Activated naive CD4-positive, alpha-beta T cell treated with anti-CD3 and anti-CD28 coated beads for 36 hours (primary cell): ENCODE measurements at regions of chr6 and their contacts with region 1.

Region 1: DNA sequence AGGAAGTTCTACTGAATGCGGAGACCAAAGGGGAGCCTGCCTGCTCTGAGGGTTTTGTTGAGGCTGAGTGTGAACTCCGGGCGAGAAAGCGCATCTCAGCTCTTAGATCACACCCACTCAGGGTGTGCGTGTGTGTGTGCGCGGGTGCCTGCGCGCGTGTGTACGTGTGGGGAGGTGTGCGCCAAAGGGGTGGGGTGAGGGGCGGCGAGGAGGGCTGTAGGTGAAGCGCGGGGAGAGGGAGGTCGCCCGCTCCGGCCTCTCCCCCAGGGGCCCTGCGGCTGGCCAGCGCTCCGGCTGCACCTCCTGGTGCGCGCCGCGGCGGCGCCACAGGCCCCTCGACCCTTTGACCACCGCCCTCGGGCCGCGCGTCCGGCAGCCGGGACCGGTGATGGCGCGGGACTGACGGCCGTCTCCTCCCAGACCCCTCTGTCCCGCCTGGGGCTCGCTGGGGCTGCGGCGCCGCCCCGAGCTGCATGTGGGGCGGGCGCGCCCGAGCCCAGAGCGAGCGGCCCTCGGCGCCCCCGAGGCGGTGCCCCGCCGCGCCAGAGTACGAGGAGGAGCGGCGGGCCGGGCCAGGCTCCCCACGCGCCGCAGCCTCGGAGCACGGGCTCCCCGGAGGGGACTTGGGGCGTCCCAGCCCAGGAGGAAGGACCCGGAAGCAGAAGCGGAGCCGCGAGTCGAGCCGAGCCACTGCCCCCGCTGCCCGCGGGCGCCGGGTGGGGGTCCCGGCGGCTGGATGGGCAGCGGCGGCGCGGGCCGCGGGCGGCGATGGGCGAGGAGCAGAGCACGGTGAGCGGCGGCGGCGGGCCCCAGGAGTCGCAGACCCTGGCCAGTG is at the start of gene RNF217:
- DNase-seq: peak; percentile 33
- H3K4me3 Mint-ChIP-seq: peak within 1 kb of the TSS; percentile 81
- H3K27ac Mint-ChIP-seq: no peak within 1 kb of the TSS
- H3K4me1 Mint-ChIP-seq: peaks cover 41% of the 10 kb centered on the region
- H3K27me3 Mint-ChIP-seq: peaks cover 52% of the 10 kb centered on the region
- total RNA-seq, gene RNF217: 1.8 to 2.4 TPM

Region 2: GRCh38 chr6:124742971-124743370 is 219.0 kb before region 1 on chr6:
- CTCF ChIA-PET with region 1: no interaction called
- intact Hi-C with region 1: no loop called
- DNase-seq: no peak
- H3K4me3 Mint-ChIP-seq: no peak overlapping the region
- H3K27ac Mint-ChIP-seq: no peak overlapping the region
- H3K4me1 Mint-ChIP-seq: no peaks in the 10 kb centered on the region
- H3K27me3 Mint-ChIP-seq: no peaks in the 10 kb centered on the region

Region 3: DNA sequence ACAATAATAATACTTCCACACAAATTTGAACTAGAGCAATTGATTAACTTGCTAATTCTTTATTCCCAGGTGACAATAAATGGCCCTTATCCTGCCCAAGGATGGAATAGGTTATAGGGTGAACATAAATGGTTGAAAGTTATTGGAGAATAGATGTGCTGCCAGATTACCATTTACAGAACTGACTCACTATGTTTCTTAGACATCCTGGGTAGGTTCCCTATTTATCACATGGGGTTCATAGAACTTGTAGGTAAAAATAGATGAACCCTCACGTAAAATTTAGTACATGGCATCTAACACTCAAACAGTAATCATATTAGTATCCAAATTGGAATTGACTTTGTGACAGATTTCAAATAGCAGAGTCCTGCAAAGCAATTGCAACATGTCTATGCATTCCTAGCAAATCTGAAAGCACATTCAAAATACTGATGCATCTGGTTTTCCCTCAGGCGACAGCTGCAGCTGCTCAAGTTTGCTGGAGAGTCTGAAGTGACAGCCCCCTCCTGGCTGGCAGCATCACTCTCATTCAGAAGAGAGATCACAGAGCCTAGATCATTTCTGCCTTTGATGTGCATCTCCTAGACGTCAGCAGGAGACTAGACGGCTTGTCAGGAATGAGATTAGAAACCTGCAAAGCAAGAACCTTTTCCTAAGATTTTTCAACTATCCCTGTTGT is 80.0 kb before region 1 on chr6:
- CTCF ChIA-PET with region 1: interaction called, 5 read pairs
- intact Hi-C with region 1: loop called (anchors 2 kb)
- DNase-seq: no peak
- H3K4me3 Mint-ChIP-seq: no peak overlapping the region
- H3K27ac Mint-ChIP-seq: peak overlapping the region; percentile 14
- H3K4me1 Mint-ChIP-seq: peaks cover 19% of the 10 kb centered on the region
- H3K27me3 Mint-ChIP-seq: peaks cover 6% of the 10 kb centered on the region

Region 4: GRCh38 chr6:124947971-124948451 is 14.0 kb before region 1 on chr6:
- CTCF ChIA-PET with region 1: no interaction called
- intact Hi-C with region 1: loop called (anchors 1 kb)
- DNase-seq: no peak
- H3K4me3 Mint-ChIP-seq: no peak overlapping the region
- H3K27ac Mint-ChIP-seq: no peak overlapping the region
- H3K4me1 Mint-ChIP-seq: peaks cover 10% of the 10 kb centered on the region
- H3K27me3 Mint-ChIP-seq: peaks cover 6% of the 10 kb centered on the region

Region 5: DNA sequence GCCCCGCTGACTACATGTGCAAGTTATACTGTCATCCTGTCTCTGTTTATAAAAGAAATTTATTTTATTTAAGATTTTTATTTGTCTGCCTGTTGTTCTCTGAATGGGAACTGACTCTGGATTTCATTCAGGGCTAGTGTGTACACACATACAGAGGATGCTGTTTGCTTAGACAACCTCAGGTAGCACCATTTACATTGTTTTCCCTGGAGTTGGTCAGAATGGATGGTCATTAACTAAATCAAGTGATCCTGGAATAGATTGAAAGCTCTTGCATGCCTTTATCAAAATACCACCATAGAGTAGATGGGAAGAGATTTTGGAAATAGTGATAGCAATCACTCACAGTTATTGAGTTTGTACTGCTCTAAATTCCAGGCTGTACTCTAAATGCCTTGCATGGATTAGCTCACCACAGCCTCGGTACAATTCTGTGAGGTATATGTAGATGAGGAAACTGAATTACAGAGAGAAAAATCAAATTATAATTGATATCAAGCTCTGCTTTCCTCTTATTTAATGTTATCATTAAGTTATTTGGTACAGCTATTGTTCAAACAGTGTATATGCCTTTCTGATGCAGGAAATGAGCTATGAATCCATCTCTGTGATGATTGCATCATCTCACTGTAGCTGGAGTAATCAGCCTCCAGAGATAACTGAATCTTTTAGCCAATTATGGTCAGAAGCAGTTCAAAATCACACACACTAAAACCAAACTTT is 52.1 kb after region 1 on chr6:
- CTCF ChIA-PET with region 1: no interaction called
- intact Hi-C with region 1: loop called (anchors 2 kb)
- DNase-seq: no peak
- H3K4me3 Mint-ChIP-seq: no peak overlapping the region
- H3K27ac Mint-ChIP-seq: peak overlapping the region; percentile 3
- H3K4me1 Mint-ChIP-seq: peaks cover 13% of the 10 kb centered on the region
- H3K27me3 Mint-ChIP-seq: peaks cover 3% of the 10 kb centered on the region

Region 6: DNA sequence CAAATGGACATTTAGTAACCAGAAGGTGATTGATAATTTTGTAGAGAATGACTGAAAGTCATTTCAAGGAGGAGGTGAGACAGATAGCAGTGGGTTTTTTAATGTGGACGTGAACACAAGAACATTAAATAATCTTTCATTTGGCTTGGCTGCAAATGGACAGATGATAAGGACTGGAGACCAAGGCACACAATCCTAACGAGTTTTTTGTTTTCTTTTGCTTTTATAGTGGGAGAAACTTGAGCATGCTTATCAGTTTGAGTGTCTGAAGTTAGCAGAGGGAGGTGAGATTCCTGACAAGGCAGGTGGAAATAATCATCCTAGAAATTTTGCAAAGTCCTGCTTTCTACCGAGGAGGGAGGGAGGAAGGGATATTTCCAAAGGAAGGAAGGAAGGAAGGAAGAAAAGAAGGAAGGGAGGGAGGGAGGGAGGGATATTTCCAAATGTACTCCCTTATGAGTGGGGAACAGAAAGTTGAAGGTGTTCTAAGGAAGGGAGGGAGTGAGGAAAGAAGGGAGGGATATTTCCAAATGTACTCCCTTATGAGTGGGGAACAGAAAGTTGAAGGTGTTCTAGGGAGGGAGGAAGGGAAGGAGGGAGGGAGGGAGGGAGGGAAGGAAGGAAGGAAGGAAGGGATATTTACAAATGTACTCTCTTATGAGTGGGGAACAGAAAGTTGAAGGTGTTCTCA is 63.3 kb after region 1 on chr6:
- CTCF ChIA-PET with region 1: no interaction called
- intact Hi-C with region 1: no loop called
- DNase-seq: no peak
- H3K4me3 Mint-ChIP-seq: no peak overlapping the region
- H3K27ac Mint-ChIP-seq: no peak overlapping the region
- H3K4me1 Mint-ChIP-seq: no peaks in the 10 kb centered on the region
- H3K27me3 Mint-ChIP-seq: peaks cover 6% of the 10 kb centered on the region

Region 7: GRCh38 chr6:125066964-125067363 is 105.0 kb after region 1 on chr6:
- CTCF ChIA-PET with region 1: no interaction called
- intact Hi-C with region 1: loop called (anchors 2 kb)
- DNase-seq: peak; percentile 49
- H3K4me3 Mint-ChIP-seq: no peak overlapping the region
- H3K27ac Mint-ChIP-seq: no peak overlapping the region
- H3K4me1 Mint-ChIP-seq: no peaks in the 10 kb centered on the region
- H3K27me3 Mint-ChIP-seq: no peaks in the 10 kb centered on the region

Region 8: DNA sequence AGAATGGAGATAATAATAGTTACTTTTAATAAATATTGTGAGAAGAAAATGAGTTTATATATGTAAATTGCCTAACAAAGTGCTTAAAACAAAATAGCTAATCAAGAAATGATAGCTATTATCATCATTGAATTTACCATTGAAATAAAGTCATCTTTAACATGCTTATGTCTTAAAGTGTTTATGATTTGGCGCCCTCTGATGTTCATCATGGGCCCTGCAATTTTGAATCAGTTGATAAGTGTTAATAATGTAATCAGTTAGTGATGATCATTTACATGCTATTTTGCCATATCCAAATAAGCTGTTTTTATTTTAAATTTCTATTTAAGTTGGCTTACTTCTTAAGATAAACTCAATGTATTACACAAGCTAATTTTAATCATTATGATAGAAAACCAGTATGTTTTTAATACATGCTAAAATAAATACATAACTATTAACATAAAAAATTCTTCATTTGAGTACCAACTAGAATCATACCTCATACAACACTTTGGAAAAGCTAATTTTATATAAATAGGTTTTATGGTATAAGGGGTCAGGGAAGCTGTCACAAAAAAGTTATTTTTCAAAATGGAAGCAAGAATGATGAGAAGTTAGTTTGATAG is 152.4 kb after region 1 on chr6:
- CTCF ChIA-PET with region 1: no interaction called
- intact Hi-C with region 1: loop called (anchors 5 kb)
- DNase-seq: peak; percentile 76
- H3K4me3 Mint-ChIP-seq: no peak overlapping the region
- H3K27ac Mint-ChIP-seq: no peak overlapping the region
- H3K4me1 Mint-ChIP-seq: no peaks in the 10 kb centered on the region
- H3K27me3 Mint-ChIP-seq: no peaks in the 10 kb centered on the region

Region 9: DNA sequence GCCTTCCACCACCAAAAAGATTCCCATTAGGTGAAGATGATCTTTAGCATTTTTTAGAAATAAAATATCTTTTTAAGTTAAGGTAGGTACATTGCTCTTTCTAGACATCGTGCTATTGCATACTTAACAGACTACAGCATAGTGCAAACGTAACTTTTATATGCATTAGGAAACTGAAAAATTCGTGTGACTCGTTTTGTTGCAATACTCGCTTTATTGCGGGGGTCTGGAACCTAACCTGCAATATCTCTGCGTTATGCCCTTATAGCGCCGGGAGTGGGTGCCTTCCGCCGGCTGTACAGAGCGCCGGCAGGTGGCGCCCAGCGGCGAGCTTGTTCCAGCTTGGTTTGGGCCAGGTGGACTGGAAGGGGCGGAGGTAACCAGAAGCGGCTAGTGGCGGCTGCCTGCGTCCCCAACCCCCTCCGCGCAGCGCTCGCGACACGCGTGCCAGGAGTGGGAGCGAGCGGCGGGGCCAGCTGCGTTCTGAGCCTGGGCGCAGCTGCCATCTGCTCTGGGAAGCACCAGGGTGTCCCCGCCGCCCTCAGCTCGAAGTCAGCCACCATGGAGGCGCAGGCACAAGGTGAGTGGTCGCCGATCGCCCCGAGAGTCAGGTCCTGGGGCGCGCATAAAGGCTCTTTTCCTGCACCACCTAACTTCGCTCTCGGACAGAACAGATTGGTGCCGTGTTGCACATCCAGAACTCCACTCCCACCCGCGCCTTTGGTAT is 191.6 kb after region 1 on chr6 and contains the start of gene TPD52L1:
- CTCF ChIA-PET with region 1: no interaction called
- intact Hi-C with region 1: loop called (anchors 5 kb)
- DNase-seq: peak; percentile 73
- H3K4me3 Mint-ChIP-seq: peak within 1 kb of the TSS; percentile 74
- H3K27ac Mint-ChIP-seq: no peak within 1 kb of the TSS
- H3K4me1 Mint-ChIP-seq: peaks cover 6% of the 10 kb centered on the region
- H3K27me3 Mint-ChIP-seq: peaks cover 28% of the 10 kb centered on the region
- total RNA-seq, gene TPD52L1: 5.6 to 5.7 TPM